Activated naive CD4-positive, alpha-beta T cell treated with anti-CD3 and anti-CD28 coated beads for 36 hours (primary cell): ENCODE measurements at regions of chr6 and their contacts with region 1.

Region 1: DNA sequence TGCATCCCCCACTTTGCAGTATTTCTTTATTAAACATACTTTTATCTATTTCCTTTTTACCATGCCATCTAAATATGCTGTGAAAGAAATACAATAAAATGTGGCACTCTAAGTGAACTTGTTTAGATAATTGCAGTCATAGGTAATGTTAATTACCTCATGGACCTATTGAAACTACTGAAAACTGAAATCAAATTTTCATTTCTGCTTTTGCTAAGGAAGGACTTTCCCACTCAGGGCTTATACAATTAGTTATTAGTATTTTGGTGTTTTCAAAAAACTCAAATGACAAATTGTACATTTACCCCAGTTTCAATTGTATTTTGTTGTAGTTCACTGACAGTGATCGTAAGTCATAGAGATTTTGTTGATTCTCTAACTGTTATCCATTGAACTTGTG is 88.4 kb downstream of the ID4 start:
- DNase-seq: no peak
- H3K4me3 Mint-ChIP-seq: no peak overlapping the region
- H3K27ac Mint-ChIP-seq: no peak overlapping the region
- H3K4me1 Mint-ChIP-seq: no peaks in the 10 kb centered on the region
- H3K27me3 Mint-ChIP-seq: peaks cover 4% of the 10 kb centered on the region

Region 2: DNA sequence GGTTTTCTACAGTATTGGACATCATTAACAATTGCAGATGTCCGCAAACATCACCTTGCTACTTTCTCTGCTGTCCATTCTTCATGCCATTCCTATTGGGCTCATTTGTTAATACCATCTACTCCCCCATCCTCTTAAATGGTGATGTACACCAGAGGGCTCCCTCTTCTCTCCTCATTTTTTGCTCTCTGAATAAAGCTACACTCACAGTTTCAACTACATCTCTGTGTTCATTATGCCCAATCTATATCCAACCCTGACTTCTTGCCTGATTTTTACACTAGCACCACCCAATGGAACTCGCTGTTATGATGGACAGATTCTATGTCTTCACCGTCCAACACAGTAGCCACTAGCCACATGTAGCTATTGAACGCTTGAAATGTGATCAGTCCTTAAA is 376.4 kb before region 1 on chr6:
- CTCF ChIA-PET with region 1: no interaction called
- intact Hi-C with region 1: loop called (anchors 10 kb)
- DNase-seq: no peak
- H3K4me3 Mint-ChIP-seq: no peak overlapping the region
- H3K27ac Mint-ChIP-seq: no peak overlapping the region
- H3K4me1 Mint-ChIP-seq: no peaks in the 10 kb centered on the region
- H3K27me3 Mint-ChIP-seq: no peaks in the 10 kb centered on the region